ENCODE measurements at regions of chr1 and their contacts with region 1.

Region 1: DNA sequence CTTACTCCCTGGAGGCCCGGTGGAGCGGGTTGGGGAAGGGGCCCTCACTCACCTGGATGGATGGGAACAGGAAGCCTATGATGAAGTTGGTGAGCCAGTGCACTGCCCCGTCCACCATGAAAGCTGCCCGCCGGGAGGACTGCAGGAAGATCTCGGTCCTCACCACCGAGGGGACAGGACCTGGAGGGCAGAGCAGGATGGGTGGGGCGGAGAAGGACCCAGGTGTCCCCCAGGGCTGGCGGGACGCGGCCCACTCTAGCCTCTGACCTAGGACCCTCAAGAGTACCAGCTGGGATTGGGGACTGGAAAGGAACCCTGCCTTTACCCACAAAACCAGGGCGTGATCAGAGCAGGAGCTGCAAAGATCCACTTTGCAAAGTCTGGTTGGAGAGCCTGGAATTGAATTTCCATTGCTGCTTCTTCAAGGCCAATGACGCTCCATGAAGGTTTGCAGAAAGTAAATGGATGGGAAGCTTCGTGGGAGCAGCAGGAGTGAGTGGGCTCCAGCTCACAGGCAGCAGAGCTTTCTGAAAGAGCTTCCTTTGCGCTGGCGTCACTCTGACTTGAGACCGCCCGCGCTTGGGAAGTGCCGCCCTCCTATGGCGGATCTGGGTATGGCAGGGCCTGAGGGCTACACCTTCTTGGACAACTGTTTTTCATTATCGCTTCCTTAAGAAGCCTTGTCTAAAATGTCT is 21.4 kb downstream of the SLC2A7 start:
- DNase-seq: peak; percentile 69 to 80
- H3K4me3 ChIP-seq: no peak overlapping the region
- H3K4me3 Mint-ChIP-seq: no peak overlapping the region
- H3K27ac Mint-ChIP-seq: no peak overlapping the region
- H3K4me1 ChIP-seq: peaks cover 46% of the 10 kb centered on the region
- H3K4me1 Mint-ChIP-seq: peaks cover 19% of the 10 kb centered on the region
- H3K27me3 ChIP-seq: no peaks in the 10 kb centered on the region
- H3K27me3 Mint-ChIP-seq: no peaks in the 10 kb centered on the region
- CTCF ChIP-seq: peak; percentile 79 to 83

Region 2: GRCh38 chr1:9037476-9038337 is 32.9 kb after region 1 on chr1:
- CTCF ChIA-PET with region 1: no interaction called
- POLR2A ChIA-PET with region 1: no interaction called
- intact Hi-C with region 1: no loop called
- DNase-seq: no peak
- H3K4me3 ChIP-seq: no peak overlapping the region
- H3K4me3 Mint-ChIP-seq: no peak overlapping the region
- H3K27ac Mint-ChIP-seq: no peak overlapping the region
- H3K4me1 ChIP-seq: no peaks in the 10 kb centered on the region
- H3K4me1 Mint-ChIP-seq: no peaks in the 10 kb centered on the region
- H3K27me3 ChIP-seq: no peaks in the 10 kb centered on the region
- H3K27me3 Mint-ChIP-seq: no peaks in the 10 kb centered on the region
- CTCF ChIP-seq: no peak

Region 3: DNA sequence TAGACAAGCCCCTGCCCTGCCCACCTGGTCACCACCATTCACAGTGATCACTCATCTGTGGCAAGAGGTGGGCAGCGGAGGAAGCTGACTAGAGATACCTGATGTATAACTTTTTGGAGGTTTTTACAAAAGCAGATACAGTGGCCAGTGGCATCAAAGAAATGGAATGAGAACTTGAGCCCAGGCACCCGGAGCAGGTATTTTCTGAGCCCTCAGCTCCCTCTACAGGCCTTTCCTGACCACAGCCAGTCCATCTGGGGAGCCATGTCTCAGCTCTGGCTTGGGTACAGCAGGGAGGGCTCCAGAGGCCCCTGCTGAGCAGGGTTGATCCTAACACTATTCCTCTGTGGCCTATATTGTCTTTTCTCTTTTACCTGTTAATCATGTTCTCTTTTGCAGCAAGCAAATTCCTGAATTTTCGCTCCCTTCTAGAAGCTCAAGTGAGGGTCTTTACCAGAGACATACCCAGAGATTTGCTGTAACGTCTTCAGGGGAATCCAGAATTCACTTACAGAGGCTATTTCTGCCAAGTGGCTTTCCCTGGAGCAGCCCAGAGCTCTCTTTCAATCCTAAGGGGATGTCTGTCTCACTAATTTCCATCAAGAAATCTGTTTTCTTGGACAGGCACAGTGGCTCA is 96.8 kb after region 1 on chr1:
- CTCF ChIA-PET with region 1: interaction called, 11 read pairs
- POLR2A ChIA-PET with region 1: no interaction called
- intact Hi-C with region 1: loop called (anchors 1 kb)
- DNase-seq: peak; percentile 63 to 65
- H3K4me3 ChIP-seq: no peak overlapping the region
- H3K4me3 Mint-ChIP-seq: no peak overlapping the region
- H3K27ac Mint-ChIP-seq: no peak overlapping the region
- H3K4me1 ChIP-seq: no peaks in the 10 kb centered on the region
- H3K4me1 Mint-ChIP-seq: no peaks in the 10 kb centered on the region
- H3K27me3 ChIP-seq: no peaks in the 10 kb centered on the region
- H3K27me3 Mint-ChIP-seq: no peaks in the 10 kb centered on the region
- CTCF ChIP-seq: peak; percentile 44 to 78